ENCODE measurements at regions of chr12 and their contacts with region 1.

Region 1: DNA sequence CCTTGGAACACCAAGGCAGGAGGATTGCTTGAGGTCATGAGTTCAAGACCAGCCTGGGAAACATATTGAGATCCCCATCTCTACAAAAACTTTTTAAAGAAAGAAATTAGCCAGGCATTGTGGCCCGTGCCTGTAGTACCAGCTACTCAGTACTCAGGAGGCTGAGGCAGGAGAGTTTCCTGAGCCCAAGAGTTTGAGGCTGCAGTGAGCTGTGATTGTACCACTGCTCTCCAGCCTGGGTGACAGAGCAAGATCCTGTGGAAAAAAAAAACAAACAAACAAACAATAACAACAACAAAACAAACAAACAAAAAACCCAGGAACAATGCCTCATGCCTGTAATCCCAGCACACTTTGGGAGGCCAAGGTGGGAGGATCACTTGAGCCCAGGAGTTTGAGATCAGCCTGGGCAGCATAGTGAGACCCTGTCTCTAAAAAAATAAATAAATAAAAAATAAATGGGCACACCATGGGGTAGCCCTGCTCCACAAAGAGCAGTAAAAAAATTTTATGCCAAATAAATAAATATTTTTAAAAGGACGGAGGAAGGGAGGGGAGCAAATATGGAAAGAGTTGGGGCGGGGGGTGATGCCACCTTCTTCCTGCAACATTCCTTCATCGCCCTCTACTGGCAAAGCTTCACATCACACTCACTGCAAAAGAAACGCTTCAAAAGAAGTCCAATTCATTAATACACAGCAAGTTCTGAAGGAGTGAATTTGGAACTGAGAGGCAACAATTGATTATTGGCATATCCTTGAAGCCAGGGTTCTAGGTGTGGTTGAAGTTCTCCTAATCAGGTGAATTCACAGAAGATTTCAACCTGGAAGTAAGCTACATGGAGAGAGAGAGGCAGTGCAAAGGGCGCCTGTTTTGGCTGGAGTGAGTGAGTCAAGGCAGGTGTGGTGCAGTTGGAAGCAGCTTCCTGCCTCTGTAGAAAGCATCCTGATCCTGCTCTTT is 8.8 kb upstream of the GNPTAB start:
- DNase-seq: peak; percentile 75
- ATAC-seq: peak; percentile 77

Region 2: GRCh38 chr12:101424620-101425019 is 415.0 kb before region 1 on chr12:
- intact Hi-C with region 1: loop called (anchors 5 kb)
- DNase-seq: no peak
- ATAC-seq: no peak

Region 3: DNA sequence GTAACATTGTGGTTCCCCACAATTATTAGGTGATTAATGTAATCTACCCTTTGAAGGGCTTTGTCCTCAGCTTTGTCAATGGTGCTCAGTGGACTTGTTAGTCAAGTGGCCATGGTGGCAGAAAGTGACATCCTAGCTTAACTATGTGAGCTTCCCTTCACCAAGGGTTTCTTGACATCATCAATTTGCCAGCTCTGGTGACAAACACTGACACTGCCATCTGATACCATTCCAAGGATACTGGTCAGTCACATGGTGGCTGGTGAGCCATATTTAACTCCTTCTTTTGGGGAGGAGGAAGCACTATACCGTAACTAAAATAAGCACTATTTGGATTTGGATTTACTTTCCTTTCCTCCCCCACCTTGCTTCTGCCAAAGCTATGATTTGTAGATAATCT is 525.1 kb after region 1 on chr12:
- intact Hi-C with region 1: no loop called
- DNase-seq: no peak
- ATAC-seq: no peak